WTC11 (cell line): ENCODE measurements at regions of chr15 and their contacts with region 1.

Region 1: DNA sequence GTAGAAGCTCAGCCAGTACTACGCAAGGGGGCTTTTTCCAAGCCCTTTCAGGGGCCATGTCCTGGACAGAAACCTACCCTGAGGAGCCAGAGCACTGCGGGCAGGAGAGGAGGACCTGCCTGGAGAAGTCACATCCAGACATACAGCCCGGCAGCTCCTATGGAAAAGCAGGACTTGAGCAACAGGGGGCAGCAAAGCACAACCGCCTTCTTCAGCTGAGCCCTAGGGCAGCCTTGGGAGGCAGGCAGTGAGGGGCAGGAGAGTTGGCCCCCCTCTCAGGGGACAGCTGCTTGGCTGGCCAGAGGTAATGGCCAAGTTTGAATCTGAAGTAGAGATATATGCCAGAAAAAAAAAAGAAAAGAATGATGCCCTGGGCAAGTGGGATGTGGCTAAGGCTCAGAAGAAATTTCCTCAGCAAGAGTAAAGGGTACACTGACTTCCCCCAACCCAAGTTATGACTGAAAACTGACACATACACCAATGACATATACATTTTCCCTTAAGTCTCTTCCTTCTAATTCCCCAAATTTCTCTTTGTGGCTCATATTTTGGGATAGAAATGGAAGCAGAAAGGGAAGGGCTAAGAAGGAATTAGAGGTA is 56.9 kb downstream of the CYP19A1 start:
- DNase-seq: peak; percentile 80
- ATAC-seq: peak; percentile 99
- H3K4me3 Mint-ChIP-seq: no peak overlapping the region
- H3K27ac Mint-ChIP-seq: no peak overlapping the region
- H3K4me1 Mint-ChIP-seq: no peaks in the 10 kb centered on the region
- H3K27me3 Mint-ChIP-seq: no peaks in the 10 kb centered on the region; the same call in 1 of the 2 replicates
- CTCF ChIP-seq: peak; percentile 58

Region 2: DNA sequence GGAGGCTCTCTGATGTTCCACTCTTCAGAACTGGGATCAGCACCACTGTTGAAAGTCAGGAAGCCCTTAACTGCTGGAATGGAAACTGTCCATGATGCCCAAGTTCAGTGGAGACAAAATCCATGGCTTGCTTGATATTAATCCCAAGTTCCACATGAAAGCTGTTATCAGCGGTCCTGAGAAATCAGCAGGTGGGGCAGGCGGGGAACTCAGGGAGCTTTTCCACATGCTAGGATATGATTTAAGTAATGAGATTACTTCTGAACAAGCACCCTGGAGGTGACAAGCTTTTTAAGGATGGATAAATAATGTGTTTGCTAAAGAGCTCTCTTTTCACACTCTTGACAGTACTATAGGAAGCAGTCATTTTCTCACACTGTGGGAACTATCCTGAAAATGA is 25.9 kb before region 1 on chr15:
- CTCF ChIA-PET with region 1: no interaction called
- POLR2A ChIA-PET with region 1: no interaction called
- DNase-seq: no peak
- ATAC-seq: no peak
- H3K4me3 Mint-ChIP-seq: no peak overlapping the region
- H3K27ac Mint-ChIP-seq: no peak overlapping the region
- H3K4me1 Mint-ChIP-seq: no peaks in the 10 kb centered on the region
- H3K27me3 Mint-ChIP-seq: peaks cover 4% of the 10 kb centered on the region; the same call in 1 of the 2 replicates
- CTCF ChIP-seq: no peak

Region 3: DNA sequence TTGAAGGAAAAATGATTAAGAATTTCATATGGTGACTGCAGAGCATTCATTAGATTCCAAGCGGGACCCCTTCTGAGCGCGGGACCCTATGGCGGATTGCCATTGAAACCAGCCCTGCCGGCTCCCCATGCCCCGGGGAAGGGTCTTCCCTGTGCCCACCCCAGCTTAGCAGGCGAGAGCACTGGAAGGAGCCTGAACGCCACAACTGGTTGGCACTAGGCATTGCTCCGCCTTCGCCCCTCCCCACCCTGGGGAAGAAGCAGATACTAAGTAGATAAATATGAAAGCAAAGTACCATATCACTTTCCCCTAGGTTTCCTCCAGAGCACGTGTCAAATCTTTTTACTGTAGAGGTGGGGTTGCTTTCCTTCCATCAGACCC is 13.8 kb before region 1 on chr15:
- CTCF ChIA-PET with region 1: interaction called, 11 read pairs
- POLR2A ChIA-PET with region 1: no interaction called
- DNase-seq: peak; percentile 29
- ATAC-seq: peak; percentile 69
- H3K4me3 Mint-ChIP-seq: peak overlapping the region; percentile 69
- H3K27ac Mint-ChIP-seq: no peak overlapping the region
- H3K4me1 Mint-ChIP-seq: peaks cover 9% of the 10 kb centered on the region
- H3K27me3 Mint-ChIP-seq: peaks cover 4% of the 10 kb centered on the region
- CTCF ChIP-seq: no peak

Region 4: GRCh38 chr15:51299187-51300066 is 18.0 kb after region 1 on chr15:
- CTCF ChIA-PET with region 1: interaction called, 17 read pairs
- POLR2A ChIA-PET with region 1: no interaction called
- DNase-seq: no peak
- ATAC-seq: no peak
- H3K4me3 Mint-ChIP-seq: no peak overlapping the region
- H3K27ac Mint-ChIP-seq: no peak overlapping the region
- H3K4me1 Mint-ChIP-seq: peaks cover 3% of the 10 kb centered on the region; the same call in 1 of the 2 replicates
- H3K27me3 Mint-ChIP-seq: peaks cover 14% of the 10 kb centered on the region
- CTCF ChIP-seq: no peak

Region 5: DNA sequence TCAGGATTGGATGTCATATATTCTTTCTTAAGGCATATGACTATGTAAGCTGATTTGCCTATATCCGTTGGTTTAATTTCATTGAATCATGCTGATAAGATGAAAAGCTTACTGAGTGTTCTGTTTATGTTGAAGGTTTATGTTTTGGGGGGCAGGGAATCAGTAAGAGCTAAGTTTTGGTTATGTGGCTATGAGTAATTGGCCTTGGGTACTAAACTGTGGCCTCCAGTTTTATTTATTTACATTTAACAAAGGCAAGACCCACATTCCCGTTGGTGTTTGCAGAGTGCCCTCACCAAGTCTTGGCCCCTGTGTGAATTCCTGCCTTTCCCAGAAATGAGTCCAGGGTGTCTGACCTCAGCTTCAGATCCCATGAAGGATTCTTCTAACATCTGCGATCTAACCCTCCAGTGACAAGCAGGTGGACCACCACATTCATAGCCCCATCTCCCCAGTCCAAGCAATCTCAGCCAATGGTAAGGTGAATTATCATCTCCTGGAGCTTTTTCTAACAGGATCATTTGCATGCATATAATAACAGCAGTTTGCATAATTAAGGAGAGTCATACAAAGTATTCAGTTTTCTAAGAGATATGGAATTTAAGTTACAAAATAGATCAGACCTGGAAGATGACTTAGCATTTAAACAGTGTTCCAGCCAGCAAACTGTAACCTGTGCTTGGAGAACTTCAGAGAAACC is 87.4 kb after region 1 on chr15:
- CTCF ChIA-PET with region 1: interaction called, 10 read pairs
- POLR2A ChIA-PET with region 1: no interaction called
- DNase-seq: no peak
- ATAC-seq: no peak
- H3K4me3 Mint-ChIP-seq: no peak overlapping the region
- H3K27ac Mint-ChIP-seq: no peak overlapping the region
- H3K4me1 Mint-ChIP-seq: peaks cover 4% of the 10 kb centered on the region; the same call in 1 of the 2 replicates
- H3K27me3 Mint-ChIP-seq: no peaks in the 10 kb centered on the region
- CTCF ChIP-seq: no peak

Region 6: GRCh38 chr15:51390966-51391432 is 109.5 kb after region 1 on chr15:
- CTCF ChIA-PET with region 1: interaction called, 10 read pairs
- POLR2A ChIA-PET with region 1: no interaction called
- DNase-seq: peak; percentile 61
- ATAC-seq: peak; percentile 74
- H3K4me3 Mint-ChIP-seq: no peak overlapping the region
- H3K27ac Mint-ChIP-seq: peak overlapping the region; percentile 43
- H3K4me1 Mint-ChIP-seq: peaks cover 31% of the 10 kb centered on the region
- H3K27me3 Mint-ChIP-seq: no peaks in the 10 kb centered on the region
- CTCF ChIP-seq: no peak

Region 7: DNA sequence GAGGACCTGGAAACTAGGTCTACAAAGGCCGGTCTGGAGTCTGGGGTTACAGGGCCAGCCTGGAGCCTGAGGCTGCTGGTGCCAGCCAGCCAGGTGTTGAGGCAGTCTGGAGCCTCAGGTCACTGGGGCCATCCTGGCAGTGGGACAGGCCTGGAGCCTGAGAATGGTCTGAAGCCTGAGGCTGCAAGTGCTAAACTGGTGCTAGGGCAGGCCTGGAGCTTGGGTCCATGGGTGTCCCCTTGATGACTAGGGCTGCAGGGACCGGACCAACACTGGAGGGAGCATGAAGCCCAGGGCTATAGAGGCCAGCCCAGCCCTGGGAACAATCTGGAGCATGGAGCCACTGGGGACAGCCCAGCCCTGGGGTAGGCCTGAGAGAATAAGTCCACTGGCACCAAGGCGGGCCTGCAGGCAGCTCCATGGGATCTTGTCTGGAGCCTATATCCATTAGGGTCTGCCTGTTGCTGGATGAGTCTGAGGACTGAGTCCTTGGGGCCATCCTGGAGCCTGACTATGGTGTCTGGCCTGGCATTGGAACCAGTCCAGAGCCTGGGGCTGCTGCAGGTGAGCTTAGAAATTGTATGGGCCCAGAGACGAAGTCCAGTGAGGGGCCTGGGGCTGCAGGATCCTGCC is 161.9 kb after region 1 on chr15:
- CTCF ChIA-PET with region 1: no interaction called
- POLR2A ChIA-PET with region 1: no interaction called
- DNase-seq: no peak
- ATAC-seq: no peak
- H3K4me3 Mint-ChIP-seq: no peak overlapping the region
- H3K27ac Mint-ChIP-seq: no peak overlapping the region
- H3K4me1 Mint-ChIP-seq: no peaks in the 10 kb centered on the region
- H3K27me3 Mint-ChIP-seq: no peaks in the 10 kb centered on the region
- CTCF ChIP-seq: no peak